GM12878 (cell line): ENCODE measurements at regions of chr1 and their contacts with region 1.

Region 1: DNA sequence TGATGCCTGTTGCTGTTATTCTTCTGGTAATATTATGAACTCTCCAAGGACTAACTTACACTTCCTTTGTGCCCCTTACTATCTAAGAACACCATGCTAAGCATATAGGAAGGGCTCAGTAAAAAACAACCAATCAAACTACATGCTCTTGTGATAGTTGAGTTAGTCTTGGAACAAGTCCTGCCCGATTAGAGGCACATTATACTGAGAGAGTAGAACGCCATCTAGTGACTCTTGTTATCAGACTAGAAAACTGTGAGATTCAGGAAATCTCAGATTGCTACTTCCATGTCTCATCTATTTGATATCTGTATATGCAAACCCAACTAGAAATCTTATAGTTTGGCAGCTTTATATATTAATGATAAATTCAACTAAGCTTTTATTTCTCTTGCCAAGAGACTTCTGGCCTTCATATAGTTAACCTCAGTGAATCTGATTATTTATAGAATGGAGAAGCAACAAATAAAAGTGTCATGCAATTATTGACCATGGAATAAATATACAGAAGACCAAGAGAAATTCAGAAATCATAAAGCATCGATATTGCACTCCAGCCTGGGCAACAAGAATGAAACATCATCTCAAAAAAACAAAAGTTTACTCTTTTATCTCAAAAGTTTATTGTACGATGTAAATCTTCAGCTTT is 7.8 kb upstream of the SRRM1 start:
- DNase-seq: no peak
- ATAC-seq: peak; percentile 86
- H3K4me3 ChIP-seq: no peak overlapping the region
- H3K27ac ChIP-seq: no peak overlapping the region
- H3K4me1 ChIP-seq: no peaks in the 10 kb centered on the region
- H3K27me3 ChIP-seq: no peaks in the 10 kb centered on the region
- CTCF ChIP-seq: peak; percentile 44 to 70 (median 57); a peak in 4 of 6 replicates
- EP300 ChIP-seq: no peak
- POLR2A ChIP-seq: no peak
- RAD21 ChIP-seq: peak; percentile 68

Region 2: GRCh38 chr1:24594154-24594553 is 41.2 kb before region 1 on chr1:
- CTCF ChIA-PET with region 1: interaction called, 4 read pairs
- POLR2A ChIA-PET with region 1: no interaction called
- RAD21 ChIA-PET with region 1: no interaction called
- SMC1A ChIA-PET with region 1: no interaction called
- in situ Hi-C with region 1: no loop called
- intact Hi-C with region 1: loop called (anchors 1 kb)
- DNase-seq: no peak
- ATAC-seq: no peak
- H3K4me3 ChIP-seq: no peak overlapping the region
- H3K27ac ChIP-seq: no peak overlapping the region
- H3K4me1 ChIP-seq: no peaks in the 10 kb centered on the region
- H3K27me3 ChIP-seq: peaks cover 0 to 4% of the 10 kb centered on the region in 2 experiments; a peak in 2 of 4 replicates
- CTCF ChIP-seq: no peak
- EP300 ChIP-seq: no peak
- POLR2A ChIP-seq: no peak
- RAD21 ChIP-seq: no peak